H1 (cell line): ENCODE measurements at regions of chr12 and their contacts with region 1.

Region 1: GRCh38 chr12:125193798-125194773 is 128.9 kb downstream of the AACS start:
- DNase-seq: peak in 1 of 2 experiments; percentile 60
- H3K4me3 ChIP-seq: peak overlapping the region in 3 of 4 experiments; percentile 17 to 44 (median 36); a peak in 4 of 8 replicates
- H3K27ac ChIP-seq: no peak overlapping the region
- H3K4me1 ChIP-seq: peaks cover 22 to 41% (median 29%) of the 10 kb centered on the region in 4 experiments
- H3K27me3 ChIP-seq: no peaks in the 10 kb centered on the region; a peak in 1 of 7 replicates
- CTCF ChIP-seq: peak in 2 of 3 experiments; percentile 18 to 43; a peak in 1 of 4 replicates
- EP300 ChIP-seq: no peak
- POLR2A ChIP-seq: peak in 1 of 2 experiments; percentile 36; a peak in 1 of 3 replicates
- RAD21 ChIP-seq: peak; percentile 13 to 30; a peak in 2 of 4 replicates

Region 2: DNA sequence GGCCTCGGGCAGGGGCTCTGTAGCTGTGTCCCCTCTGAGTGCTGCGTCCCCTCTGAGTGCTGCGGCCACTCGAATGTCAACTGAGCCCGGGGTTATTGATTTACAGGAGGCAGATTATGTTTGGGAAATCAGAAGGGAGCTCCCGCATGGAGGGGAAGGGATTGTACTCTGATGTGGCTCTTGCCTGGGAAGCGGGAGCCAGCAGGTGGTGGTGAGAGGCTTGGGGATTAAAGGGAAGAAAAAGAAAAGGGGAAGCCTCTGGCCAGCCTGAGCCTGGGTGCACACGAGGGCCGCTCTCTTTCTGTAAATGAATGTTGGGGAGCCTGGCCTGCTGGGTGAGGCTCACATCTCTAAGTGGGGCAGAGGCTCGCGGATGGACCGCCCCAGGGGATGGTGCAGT is 14.9 kb after region 1 on chr12:
- CTCF ChIA-PET with region 1: interaction called, 21 read pairs
- POLR2A ChIA-PET with region 1: interaction called, 10 read pairs
- DNase-seq: no peak
- H3K4me3 ChIP-seq: no peak overlapping the region
- H3K27ac ChIP-seq: 0 out of 2 replicates have a peak overlapping the region, but pooled peaks have one; percentile 35
- H3K4me1 ChIP-seq: peaks cover 6 to 21% (median 12%) of the 10 kb centered on the region in 4 experiments
- H3K27me3 ChIP-seq: no peaks in the 10 kb centered on the region
- CTCF ChIP-seq: no peak
- EP300 ChIP-seq: no peak
- POLR2A ChIP-seq: no peak
- RAD21 ChIP-seq: no peak